ENCODE measurements at regions of chr16 and their contacts with region 1.

Region 1: GRCh38 chr16:49855280-49855821 is 561 bp downstream of the ZNF423 start:
- DNase-seq: peak; percentile 31
- ATAC-seq: peak; percentile 49
- H3K4me3 Mint-ChIP-seq: peak overlapping the region; percentile 26
- H3K27ac Mint-ChIP-seq: no peak overlapping the region
- H3K4me1 Mint-ChIP-seq: peaks cover 3% of the 10 kb centered on the region
- H3K27me3 Mint-ChIP-seq: peaks cover 38% of the 10 kb centered on the region
- CTCF ChIP-seq: no peak

Region 2: DNA sequence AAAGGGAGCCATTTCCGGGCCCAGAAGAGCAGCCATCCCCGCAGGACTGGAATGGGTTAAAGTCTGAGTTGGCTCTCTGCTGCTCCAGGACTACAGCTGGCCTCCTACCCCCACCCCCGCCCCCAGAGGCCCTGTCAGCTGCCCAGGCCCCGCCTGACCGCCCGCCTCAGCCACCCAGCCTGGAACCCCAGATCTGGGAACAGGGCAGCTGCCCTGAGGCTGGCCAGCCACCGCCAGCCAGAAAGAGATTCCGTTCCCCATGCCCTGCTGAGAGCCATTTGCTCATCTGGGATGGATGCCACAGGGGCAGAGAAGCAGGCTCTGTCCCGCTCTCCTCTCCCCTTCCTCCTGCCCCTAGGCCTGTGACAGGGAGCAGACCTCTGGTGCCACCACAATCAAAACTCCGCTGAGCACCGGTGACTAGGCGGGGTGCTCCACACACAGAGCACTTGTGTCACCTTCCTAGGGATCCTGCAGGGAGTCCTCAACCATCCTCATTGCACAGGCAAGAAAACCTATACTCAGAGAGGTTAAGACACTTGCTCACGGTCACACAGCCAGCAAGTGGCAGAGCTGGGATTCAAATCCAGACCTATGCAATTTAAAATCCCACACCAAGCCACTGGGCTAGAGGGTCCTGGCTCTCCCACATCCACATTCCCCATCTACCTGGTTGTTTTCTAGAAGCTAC is 43.6 kb before region 1 on chr16:
- CTCF ChIA-PET with region 1: no interaction called
- POLR2A ChIA-PET with region 1: no interaction called
- intact Hi-C with region 1: no loop called
- DNase-seq: no peak
- ATAC-seq: no peak
- H3K4me3 Mint-ChIP-seq: no peak overlapping the region
- H3K27ac Mint-ChIP-seq: no peak overlapping the region
- H3K4me1 Mint-ChIP-seq: no peaks in the 10 kb centered on the region
- H3K27me3 Mint-ChIP-seq: no peaks in the 10 kb centered on the region
- CTCF ChIP-seq: no peak

Region 3: GRCh38 chr16:49876716-49877129 is 21.4 kb after region 1 on chr16:
- CTCF ChIA-PET with region 1: interaction called, 28 read pairs
- POLR2A ChIA-PET with region 1: no interaction called
- intact Hi-C with region 1: no loop called
- DNase-seq: peak; percentile 48
- ATAC-seq: peak; percentile 78
- H3K4me3 Mint-ChIP-seq: no peak overlapping the region
- H3K27ac Mint-ChIP-seq: no peak overlapping the region
- H3K4me1 Mint-ChIP-seq: no peaks in the 10 kb centered on the region
- H3K27me3 Mint-ChIP-seq: peaks cover 31% of the 10 kb centered on the region
- CTCF ChIP-seq: peak; percentile 84

Region 4: DNA sequence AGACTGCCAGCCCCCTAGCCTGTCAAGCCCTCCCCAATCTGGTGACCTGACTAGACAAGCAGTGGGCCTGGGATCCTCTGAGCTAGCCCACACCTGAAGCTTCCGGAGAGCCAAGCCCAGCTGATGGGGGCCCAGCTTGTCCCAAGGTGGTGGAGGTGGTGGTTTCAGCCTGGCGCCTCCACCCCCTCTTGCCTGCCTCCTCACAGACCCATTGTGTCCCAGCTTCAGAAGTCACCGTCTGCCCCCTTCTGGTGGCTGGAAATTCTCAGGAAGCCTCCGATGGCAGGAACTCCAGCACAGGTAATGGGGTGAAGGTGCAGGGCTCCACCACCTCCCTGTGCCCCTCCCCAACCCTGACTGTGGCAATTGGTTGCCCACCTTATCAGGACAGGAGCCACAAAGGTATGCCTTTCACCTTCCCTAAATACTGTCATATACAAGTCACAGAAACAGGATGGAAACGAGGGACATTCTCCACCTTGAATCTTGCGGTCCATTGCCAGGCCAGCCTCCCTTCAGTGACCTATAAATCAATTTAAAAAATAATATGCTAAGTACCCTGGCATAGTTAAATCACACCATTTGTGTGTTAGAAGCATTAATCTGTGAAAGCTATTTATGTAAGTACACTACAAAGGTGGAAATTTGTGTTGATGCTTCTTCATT is 66.6 kb after region 1 on chr16:
- CTCF ChIA-PET with region 1: interaction called, 20 read pairs
- POLR2A ChIA-PET with region 1: no interaction called
- intact Hi-C with region 1: no loop called
- DNase-seq: peak; percentile 71
- ATAC-seq: peak; percentile 66
- H3K4me3 Mint-ChIP-seq: no peak overlapping the region
- H3K27ac Mint-ChIP-seq: no peak overlapping the region
- H3K4me1 Mint-ChIP-seq: no peaks in the 10 kb centered on the region
- H3K27me3 Mint-ChIP-seq: peaks cover 7% of the 10 kb centered on the region
- CTCF ChIP-seq: peak; percentile 55

Measured in activated CD8-positive, alpha-beta T cell treated with anti-CD3 and anti-CD28 coated beads for 36 hours (primary cell).